Vagina (tissue), 2 donors: ENCODE measurements at regions of chr1 and their contacts with region 1.

Region 1: DNA sequence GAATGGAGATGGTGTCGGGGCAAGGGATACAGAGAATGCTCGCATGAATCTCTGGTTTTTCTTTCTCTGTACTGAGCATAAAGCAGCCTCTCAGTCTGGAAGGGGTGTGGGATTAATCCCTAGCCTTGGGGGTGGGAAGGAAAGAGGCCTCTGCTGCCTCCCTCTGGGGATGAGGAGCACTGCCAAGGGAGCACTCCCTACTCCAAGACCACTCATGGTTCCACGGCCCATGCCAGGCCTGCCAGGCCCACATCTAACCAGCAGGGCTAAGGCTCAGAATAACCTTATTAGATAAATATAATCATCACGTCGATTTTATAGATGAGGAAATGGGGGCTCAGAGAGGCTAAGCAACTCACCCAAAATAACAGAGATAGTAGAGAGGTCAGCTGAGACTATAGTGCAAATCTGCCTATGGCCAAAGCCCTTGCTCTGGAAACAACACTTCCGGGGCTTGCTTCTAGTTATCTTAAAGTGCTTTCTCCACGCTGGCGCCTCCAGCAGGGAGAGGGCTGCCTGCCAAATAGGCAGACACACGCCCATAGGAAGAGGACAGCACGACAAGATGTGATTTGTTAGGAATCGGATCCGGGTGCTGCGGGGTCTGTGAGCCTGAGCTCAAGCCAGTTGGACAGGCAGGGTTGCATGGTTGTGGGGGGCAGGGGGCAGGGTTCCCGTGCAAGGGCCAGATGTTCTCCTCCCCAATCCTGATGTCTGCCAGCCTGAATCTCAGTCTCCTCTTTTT is 541 bp downstream of the TEX35 start:
- DNase-seq: no peak
- H3K4me3 ChIP-seq: no peak overlapping the region
- H3K27ac ChIP-seq: no peak overlapping the region
- H3K4me1 ChIP-seq: no peaks in the 10 kb centered on the region
- H3K27me3 ChIP-seq: no peaks in the 10 kb centered on the region
- CTCF ChIP-seq: no peak
- POLR2A ChIP-seq: no peak

Region 2: DNA sequence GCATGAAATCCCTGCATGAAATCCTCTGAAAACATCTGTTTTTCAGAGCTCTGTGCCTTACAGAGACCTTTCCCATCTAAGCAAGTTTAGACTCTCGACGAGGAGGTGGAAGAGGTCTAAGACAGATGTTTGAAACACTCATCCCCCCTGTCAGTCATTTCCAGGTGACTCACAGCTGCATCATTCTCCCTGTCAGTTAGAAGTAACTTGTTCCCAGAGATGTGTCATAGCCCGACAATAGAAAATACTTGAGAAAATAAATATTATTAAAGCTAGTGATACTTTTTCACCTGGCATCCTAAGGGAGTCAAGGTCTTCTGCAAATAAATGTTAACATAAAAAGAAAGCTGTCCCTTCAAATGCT is 502.0 kb before region 1 on chr1:
- intact Hi-C with region 1: loop called (anchors 10 kb)
- DNase-seq: no peak
- H3K4me3 ChIP-seq: no peak overlapping the region
- H3K27ac ChIP-seq: no peak overlapping the region
- H3K4me1 ChIP-seq: no peaks in the 10 kb centered on the region
- H3K27me3 ChIP-seq: no peaks in the 10 kb centered on the region
- CTCF ChIP-seq: no peak
- POLR2A ChIP-seq: no peak